ENCODE measurements at regions of chr15 and their contacts with region 1.

Region 1: GRCh38 chr15:78620021-78620526 is 722 bp downstream of the CHRNA3 start:
- DNase-seq: peak in 4 of 5 donors; percentile 60 to 72 (median 66)
- H3K4me3 ChIP-seq: peak overlapping the region in 1 of 3 donors; percentile 1
- H3K27ac ChIP-seq: no peak overlapping the region
- H3K4me1 ChIP-seq: no peaks in the 10 kb centered on the region
- H3K27me3 ChIP-seq: peaks cover 3% of the 10 kb centered on the region
- CTCF ChIP-seq: no peak

Region 2: GRCh38 chr15:78552597-78552996 is 67.5 kb before region 1 on chr15:
- intact Hi-C with region 1: no loop called
- DNase-seq: no peak
- H3K4me3 ChIP-seq: no peak overlapping the region
- H3K27ac ChIP-seq: no peak overlapping the region
- H3K4me1 ChIP-seq: no peaks in the 10 kb centered on the region
- H3K27me3 ChIP-seq: no peaks in the 10 kb centered on the region
- CTCF ChIP-seq: no peak

Region 3: GRCh38 chr15:78685159-78685921 is 65.3 kb after region 1 on chr15:
- intact Hi-C with region 1: no loop called
- DNase-seq: peak in 4 of 5 donors; percentile 63 to 75 (median 72)
- H3K4me3 ChIP-seq: no peak overlapping the region
- H3K27ac ChIP-seq: no peak overlapping the region
- H3K4me1 ChIP-seq: peaks cover 0 to 8% (median 4%) of the 10 kb centered on the region in 3 donors
- H3K27me3 ChIP-seq: no peaks in the 10 kb centered on the region
- CTCF ChIP-seq: no peak

Region 4: GRCh38 chr15:78714890-78715289 is 94.8 kb after region 1 on chr15:
- intact Hi-C with region 1: loop called (anchors 5 kb)
- DNase-seq: no peak
- H3K4me3 ChIP-seq: no peak overlapping the region
- H3K27ac ChIP-seq: no peak overlapping the region
- H3K4me1 ChIP-seq: no peaks in the 10 kb centered on the region
- H3K27me3 ChIP-seq: no peaks in the 10 kb centered on the region
- CTCF ChIP-seq: no peak

Measured in kidney (tissue), 22 donors.